Activated CD4-positive, alpha-beta T cell treated with anti-CD3 and anti-CD28 coated beads for 36 hours (primary cell): ENCODE measurements at regions of chr12 and their contacts with region 1.

Region 1: DNA sequence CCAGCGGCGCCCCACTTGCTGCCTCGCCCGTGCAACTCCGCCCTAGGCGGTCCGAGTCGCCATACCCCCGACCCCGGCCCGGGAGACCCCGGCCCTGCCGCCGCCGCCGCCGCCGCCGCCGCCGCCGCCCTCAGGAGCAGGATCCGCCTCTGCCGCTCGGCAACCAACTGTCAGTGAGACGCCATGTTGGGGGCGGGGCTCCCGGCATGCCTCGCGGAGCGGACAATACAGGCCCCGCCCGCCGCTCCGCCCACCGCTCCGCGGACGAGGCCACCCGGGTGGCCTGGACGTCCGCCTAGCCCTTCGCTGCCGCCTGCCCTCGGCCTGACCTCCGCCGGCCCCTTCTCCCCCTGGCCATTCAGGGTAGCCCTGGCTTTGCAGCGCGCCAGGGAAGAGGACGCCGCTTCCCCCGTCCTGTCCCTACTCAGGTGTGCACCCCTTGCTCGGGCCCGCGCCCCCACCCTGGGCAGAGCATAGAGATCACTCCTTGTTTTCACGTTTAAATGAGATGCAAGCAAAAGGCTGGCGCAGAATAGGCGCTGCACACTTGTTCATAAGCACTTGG is at the start of gene HECTD4:
- DNase-seq: peak; percentile 97
- ATAC-seq: peak; percentile 98
- H3K4me3 Mint-ChIP-seq: peak within 1 kb of the TSS; percentile 91
- H3K27ac Mint-ChIP-seq: peak within 1 kb of the TSS; percentile 90
- H3K4me1 Mint-ChIP-seq: peaks cover 33% of the 10 kb centered on the region
- H3K27me3 Mint-ChIP-seq: no peaks in the 10 kb centered on the region
- total RNA-seq, gene HECTD4: 22.2 to 23.8 TPM

Region 2: DNA sequence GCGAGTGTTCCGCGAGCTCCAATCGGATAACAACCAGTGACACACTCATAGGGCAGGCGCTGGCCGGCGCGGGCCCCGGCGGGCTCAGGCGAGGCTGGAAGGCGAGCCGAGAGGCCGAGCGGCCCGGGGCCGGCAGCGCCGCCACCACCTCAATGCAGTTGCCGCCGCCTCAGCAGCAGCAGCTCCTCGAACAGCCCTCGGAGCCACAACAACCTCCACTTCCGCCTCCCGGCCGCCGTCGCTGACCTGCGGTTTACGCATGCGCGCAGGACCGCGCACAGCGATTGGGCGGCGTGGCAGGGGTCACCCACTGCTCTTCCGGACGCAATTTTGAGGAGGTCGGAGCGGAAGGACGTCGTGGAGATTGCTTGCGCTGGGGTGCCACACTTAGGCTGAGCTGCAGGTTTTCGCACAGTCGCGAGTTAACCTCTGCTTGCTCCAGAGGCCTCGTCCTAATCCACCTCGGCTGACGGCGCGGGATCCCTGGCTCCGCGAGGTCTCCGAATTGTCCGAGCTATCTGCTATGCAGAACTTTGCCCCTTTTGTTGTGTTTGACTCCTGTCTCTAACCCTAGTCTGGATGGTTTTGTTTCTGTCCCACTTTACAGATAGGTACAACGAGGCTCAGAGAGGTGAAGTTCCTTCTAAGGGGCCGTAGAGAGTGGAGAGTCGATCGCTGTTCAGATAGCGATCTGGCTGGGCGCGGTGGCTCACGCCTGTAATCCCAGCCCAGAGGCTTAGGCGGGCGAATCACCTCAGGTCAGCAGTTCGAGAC is 696.4 kb before region 1 on chr12 and contains the starts of genes ACAD10 and BRAP:
- CTCF ChIA-PET with region 1: no interaction called
- POLR2A ChIA-PET with region 1: no interaction called
- intact Hi-C with region 1: loop called in 1 of 2 experiments (anchors 10 kb)
- DNase-seq: peak; percentile 95
- ATAC-seq: peak; percentile 97
- H3K4me3 Mint-ChIP-seq: peak within 1 kb of the TSS; percentile 89
- H3K27ac Mint-ChIP-seq: peak within 1 kb of the TSS; percentile 91
- H3K4me1 Mint-ChIP-seq: peaks cover 31% of the 10 kb centered on the region
- H3K27me3 Mint-ChIP-seq: no peaks in the 10 kb centered on the region
- total RNA-seq, gene ACAD10: 25.5 to 27.5 TPM
- total RNA-seq, gene BRAP: 18.3 to 23.6 TPM

Region 3: GRCh38 chr12:111942557-111942956 is 439.8 kb before region 1 on chr12:
- CTCF ChIA-PET with region 1: interaction called, 8 read pairs
- POLR2A ChIA-PET with region 1: no interaction called
- intact Hi-C with region 1: loop called (anchors 1 to 5 kb)
- DNase-seq: peak; percentile 7
- ATAC-seq: no peak
- H3K4me3 Mint-ChIP-seq: no peak overlapping the region
- H3K27ac Mint-ChIP-seq: peak overlapping the region; percentile 77
- H3K4me1 Mint-ChIP-seq: peaks cover 15% of the 10 kb centered on the region
- H3K27me3 Mint-ChIP-seq: no peaks in the 10 kb centered on the region

Region 4: DNA sequence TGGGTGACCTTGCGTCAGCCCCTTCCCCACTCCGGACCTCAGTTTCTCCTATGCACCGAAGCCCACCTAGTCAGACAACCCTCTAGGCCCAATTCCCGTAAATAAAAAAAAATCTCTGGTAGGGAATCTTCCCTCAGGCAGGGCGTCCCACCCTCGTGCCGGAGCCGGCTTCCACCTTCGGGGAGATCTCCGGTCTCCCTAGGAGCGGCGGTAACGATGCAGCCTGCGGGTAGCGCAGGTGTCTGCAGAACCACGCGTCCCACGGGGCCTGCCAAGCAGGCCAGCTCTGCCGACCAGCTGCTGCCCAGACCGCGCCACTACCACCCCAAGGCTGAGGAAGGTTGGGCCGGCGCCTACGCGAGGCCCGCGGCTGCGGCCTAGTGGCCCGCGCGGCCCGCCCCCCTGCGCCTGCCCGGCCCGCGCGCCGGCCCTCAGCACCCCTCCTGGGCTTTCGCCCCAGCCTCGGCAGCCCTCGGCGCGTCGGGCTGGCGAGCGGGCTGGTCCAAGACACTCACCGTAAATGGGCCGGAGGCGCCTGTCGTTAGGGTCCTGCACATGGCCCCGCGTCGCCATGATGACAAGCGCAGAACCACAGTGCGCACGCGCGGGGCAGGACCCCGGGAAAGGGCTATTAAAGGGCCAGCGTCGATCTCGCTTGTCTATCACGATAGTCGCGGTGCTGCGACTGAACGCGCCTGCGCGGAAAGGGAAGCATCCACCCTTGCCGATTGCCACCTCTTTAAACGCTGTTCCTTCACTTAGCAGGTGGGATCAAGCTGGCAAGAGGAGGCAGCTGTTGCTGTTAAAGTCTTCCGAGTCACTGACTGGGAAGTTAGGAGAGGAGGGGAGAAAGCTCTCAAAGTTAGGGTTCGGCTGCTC is 273.9 kb before region 1 on chr12 and contains the start of gene NAA25:
- CTCF ChIA-PET with region 1: interaction called, 4 read pairs
- POLR2A ChIA-PET with region 1: no interaction called
- intact Hi-C with region 1: loop called in 1 of 2 experiments (anchors 5 kb)
- DNase-seq: peak; percentile 94
- ATAC-seq: peak; percentile 80
- H3K4me3 Mint-ChIP-seq: peak within 1 kb of the TSS; percentile 97
- H3K27ac Mint-ChIP-seq: peak within 1 kb of the TSS; percentile 99
- H3K4me1 Mint-ChIP-seq: peaks cover 55% of the 10 kb centered on the region
- H3K27me3 Mint-ChIP-seq: no peaks in the 10 kb centered on the region
- total RNA-seq, gene NAA25: 50.9 to 58.5 TPM

Region 5: DNA sequence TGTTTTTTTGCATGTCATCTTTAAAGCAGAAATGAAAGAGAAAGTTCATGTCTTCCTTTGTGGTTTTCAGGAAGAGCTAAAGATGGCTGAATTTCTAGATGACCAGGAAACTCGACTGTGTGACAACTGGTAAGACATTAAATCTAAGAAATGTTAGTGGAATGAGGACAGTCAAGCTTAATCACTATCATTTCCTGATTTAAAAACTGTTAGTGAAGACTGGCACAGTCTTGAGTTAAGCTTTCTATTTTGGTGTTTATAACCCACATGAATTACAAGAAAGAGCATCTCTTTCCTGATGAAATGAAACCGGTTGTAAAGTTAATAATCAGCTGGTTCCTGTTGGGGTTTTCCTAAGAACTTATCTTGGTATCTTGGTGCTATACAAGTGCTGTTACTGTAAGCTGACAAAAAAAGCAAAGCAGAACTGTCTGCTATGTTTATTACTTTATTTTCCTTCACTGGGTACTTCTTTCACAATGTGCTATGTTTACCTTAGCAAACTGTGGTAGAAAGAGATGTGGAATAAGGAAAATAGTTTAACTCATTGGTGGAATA is 251.8 kb before region 1 on chr12:
- CTCF ChIA-PET with region 1: interaction called, 5 read pairs
- POLR2A ChIA-PET with region 1: no interaction called
- intact Hi-C with region 1: loop called (anchors 1 to 5 kb)
- DNase-seq: no peak
- ATAC-seq: peak; percentile 73
- H3K4me3 Mint-ChIP-seq: peak overlapping the region; percentile 51
- H3K27ac Mint-ChIP-seq: peak overlapping the region; percentile 91
- H3K4me1 Mint-ChIP-seq: peaks cover 56% of the 10 kb centered on the region
- H3K27me3 Mint-ChIP-seq: no peaks in the 10 kb centered on the region

Region 6: GRCh38 chr12:112243255-112244110 is 138.8 kb before region 1 on chr12:
- CTCF ChIA-PET with region 1: interaction called, 12 read pairs
- POLR2A ChIA-PET with region 1: no interaction called
- intact Hi-C with region 1: no loop called
- DNase-seq: no peak
- ATAC-seq: no peak
- H3K4me3 Mint-ChIP-seq: no peak overlapping the region
- H3K27ac Mint-ChIP-seq: no peak overlapping the region
- H3K4me1 Mint-ChIP-seq: no peaks in the 10 kb centered on the region
- H3K27me3 Mint-ChIP-seq: no peaks in the 10 kb centered on the region

Region 7: GRCh38 chr12:112409064-112409905 is 27.0 kb after region 1 on chr12 and contains the start of gene RPL6:
- CTCF ChIA-PET with region 1: interaction called, 5 read pairs
- POLR2A ChIA-PET with region 1: no interaction called
- intact Hi-C with region 1: loop called (anchors 1 to 2 kb)
- DNase-seq: peak; percentile 86
- ATAC-seq: peak; percentile 92
- H3K4me3 Mint-ChIP-seq: peak within 1 kb of the TSS; percentile 93
- H3K27ac Mint-ChIP-seq: peak within 1 kb of the TSS; percentile 100
- H3K4me1 Mint-ChIP-seq: peaks cover 42% of the 10 kb centered on the region
- H3K27me3 Mint-ChIP-seq: no peaks in the 10 kb centered on the region
- total RNA-seq, gene RPL6: 2,097 to 2,202 TPM